PC-9 (cell line): ENCODE measurements at regions of chr10 and their contacts with region 1.

Region 1: GRCh38 chr10:17353559-17354300 is 100.7 kb downstream of the ST8SIA6 start:
- DNase-seq: peak in 1 of 2 experiments; percentile 81
- H3K4me3 ChIP-seq: peak overlapping the region; percentile 22; the same call in 1 of the 2 replicates
- H3K27ac ChIP-seq: peak overlapping the region; percentile 69
- H3K4me1 ChIP-seq: peaks cover 57% of the 10 kb centered on the region
- H3K27me3 ChIP-seq: no peaks in the 10 kb centered on the region
- CTCF ChIP-seq: no peak

Region 2: GRCh38 chr10:17316488-17317170 is 37.1 kb before region 1 on chr10:
- CTCF ChIA-PET with region 1: no interaction called
- POLR2A ChIA-PET with region 1: no interaction called
- intact Hi-C with region 1: no loop called
- DNase-seq: no peak
- H3K4me3 ChIP-seq: no peak overlapping the region
- H3K27ac ChIP-seq: no peak overlapping the region
- H3K4me1 ChIP-seq: no peaks in the 10 kb centered on the region
- H3K27me3 ChIP-seq: no peaks in the 10 kb centered on the region
- CTCF ChIP-seq: no peak

Region 3: DNA sequence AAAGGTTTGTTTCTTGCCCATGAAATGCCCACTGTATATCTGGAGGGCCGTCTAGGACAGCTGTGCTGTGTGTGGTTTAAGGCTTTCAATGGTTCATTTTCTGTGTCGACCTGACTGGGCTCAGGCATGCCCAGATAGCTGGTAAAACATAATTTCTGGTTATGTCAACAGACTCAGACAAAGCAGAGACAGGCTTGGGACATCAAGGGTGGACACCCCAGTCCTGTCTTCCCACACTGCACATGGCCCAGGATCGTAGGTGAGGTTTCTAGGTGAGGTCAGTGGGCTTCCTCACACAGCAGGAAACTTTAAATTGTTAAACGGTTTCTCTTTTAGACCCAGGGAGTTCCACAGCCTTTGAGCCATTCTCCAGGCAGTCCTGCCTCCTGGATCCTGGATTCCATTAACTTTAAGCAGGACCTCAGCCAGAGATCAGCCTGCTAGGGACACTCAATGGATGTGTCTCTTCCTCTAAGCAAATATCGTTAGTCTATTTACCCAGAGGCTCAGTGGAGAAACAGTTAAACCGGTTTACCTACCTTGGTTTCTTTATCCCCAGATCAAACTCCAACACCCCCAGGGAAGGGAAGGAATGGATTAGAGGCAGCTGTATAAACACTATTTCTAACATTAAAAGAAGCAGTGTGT is 34.3 kb after region 1 on chr10:
- CTCF ChIA-PET with region 1: no interaction called
- POLR2A ChIA-PET with region 1: no interaction called
- intact Hi-C with region 1: loop called (anchors 2 kb)
- DNase-seq: peak; percentile 48 to 88
- H3K4me3 ChIP-seq: peak overlapping the region; percentile 23; the same call in 1 of the 2 replicates
- H3K27ac ChIP-seq: peak overlapping the region; percentile 56
- H3K4me1 ChIP-seq: peaks cover 23% of the 10 kb centered on the region
- H3K27me3 ChIP-seq: no peaks in the 10 kb centered on the region
- CTCF ChIP-seq: no peak

Region 4: GRCh38 chr10:17527516-17528146 is 173.9 kb after region 1 on chr10:
- CTCF ChIA-PET with region 1: no interaction called
- POLR2A ChIA-PET with region 1: no interaction called
- intact Hi-C with region 1: no loop called
- DNase-seq: peak; percentile 55 to 75
- H3K4me3 ChIP-seq: no peak overlapping the region
- H3K27ac ChIP-seq: peak overlapping the region; percentile 92
- H3K4me1 ChIP-seq: peaks cover 17% of the 10 kb centered on the region
- H3K27me3 ChIP-seq: no peaks in the 10 kb centered on the region
- CTCF ChIP-seq: no peak